Breast epithelium (tissue), 4 donors: ENCODE measurements at regions of chr16 and their contacts with region 1.

Region 1: DNA sequence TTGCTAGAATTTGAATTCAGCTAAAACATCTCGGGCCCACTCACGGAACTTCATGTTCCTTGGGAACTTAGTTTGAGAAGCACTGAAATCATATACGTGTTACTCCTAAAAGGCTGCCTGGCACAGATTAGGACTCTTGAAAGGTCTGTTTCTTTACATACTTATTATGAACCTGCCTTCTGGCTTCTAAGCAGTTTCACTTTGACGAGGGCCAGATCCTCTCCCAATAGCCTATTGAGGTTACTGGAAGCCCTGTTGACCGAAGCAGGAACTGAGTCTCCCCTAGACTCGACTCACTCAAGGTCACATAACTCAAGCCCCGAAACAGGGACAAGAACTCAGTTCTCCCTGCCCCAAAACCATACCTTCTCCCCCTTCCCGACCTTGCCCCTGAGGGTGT is 121.9 kb upstream of the PLCG2 start:
- DNase-seq: no peak
- H3K4me3 ChIP-seq: no peak overlapping the region
- H3K27ac ChIP-seq: peak overlapping the region in 1 of 2 donors; percentile 46
- H3K4me1 ChIP-seq: no peaks in the 10 kb centered on the region
- H3K27me3 ChIP-seq: no peaks in the 10 kb centered on the region
- CTCF ChIP-seq: no peak
- POLR2A ChIP-seq: no peak

Region 2: DNA sequence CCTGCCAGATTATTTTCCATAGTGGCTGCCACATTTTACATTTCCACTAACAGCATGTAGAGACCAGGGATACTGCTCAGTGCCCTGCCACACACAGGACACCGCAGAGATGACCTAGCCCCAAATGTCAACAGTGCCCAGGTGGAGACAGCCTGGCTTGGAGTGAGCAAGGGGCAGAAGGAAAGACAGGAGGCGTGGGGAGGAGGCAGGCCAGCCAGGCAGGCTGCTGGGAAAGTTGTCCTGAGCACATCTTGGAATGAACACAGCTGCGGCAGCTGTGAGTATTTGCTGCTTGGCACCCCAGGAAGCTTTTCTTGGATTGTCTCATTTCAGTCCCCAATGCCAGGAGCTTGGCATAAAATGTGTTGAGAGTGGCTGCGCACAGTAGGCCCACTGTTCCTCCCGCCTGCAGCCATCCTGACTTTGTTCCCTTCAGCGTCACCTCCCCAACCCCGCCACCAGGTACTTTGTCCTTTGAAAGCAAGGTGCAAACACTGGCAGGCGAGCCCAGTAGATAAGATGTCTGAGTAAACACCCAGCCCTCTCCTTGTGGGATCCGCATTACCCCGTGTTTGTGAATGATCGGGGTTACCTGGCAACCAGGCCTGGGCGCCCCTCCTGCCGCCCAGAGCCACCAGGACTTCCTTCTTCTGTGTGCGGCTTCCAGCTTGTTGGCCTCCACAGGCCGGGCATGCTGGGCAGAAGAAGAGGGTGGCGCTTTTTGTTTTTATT is 98.6 kb before region 1 on chr16:
- intact Hi-C with region 1: loop called (anchors 5 kb)
- DNase-seq: peak; percentile 66 to 69
- H3K4me3 ChIP-seq: no peak overlapping the region
- H3K27ac ChIP-seq: peak overlapping the region; percentile 70 to 74
- H3K4me1 ChIP-seq: peaks cover 0 to 6% of the 10 kb centered on the region in 2 donors
- H3K27me3 ChIP-seq: no peaks in the 10 kb centered on the region
- CTCF ChIP-seq: peak in 2 of 3 donors; percentile 22
- POLR2A ChIP-seq: no peak

Region 3: GRCh38 chr16:81608518-81609209 is 48.6 kb before region 1 on chr16:
- intact Hi-C with region 1: loop called (anchors 1 kb)
- DNase-seq: no peak
- H3K4me3 ChIP-seq: no peak overlapping the region
- H3K27ac ChIP-seq: peak overlapping the region; percentile 45 to 93
- H3K4me1 ChIP-seq: peaks cover 16 to 17% of the 10 kb centered on the region in 2 donors
- H3K27me3 ChIP-seq: no peaks in the 10 kb centered on the region
- CTCF ChIP-seq: no peak
- POLR2A ChIP-seq: no peak